HEK293 (cell line): ENCODE measurements at regions of chr22 and their contacts with region 1.

Region 1: DNA sequence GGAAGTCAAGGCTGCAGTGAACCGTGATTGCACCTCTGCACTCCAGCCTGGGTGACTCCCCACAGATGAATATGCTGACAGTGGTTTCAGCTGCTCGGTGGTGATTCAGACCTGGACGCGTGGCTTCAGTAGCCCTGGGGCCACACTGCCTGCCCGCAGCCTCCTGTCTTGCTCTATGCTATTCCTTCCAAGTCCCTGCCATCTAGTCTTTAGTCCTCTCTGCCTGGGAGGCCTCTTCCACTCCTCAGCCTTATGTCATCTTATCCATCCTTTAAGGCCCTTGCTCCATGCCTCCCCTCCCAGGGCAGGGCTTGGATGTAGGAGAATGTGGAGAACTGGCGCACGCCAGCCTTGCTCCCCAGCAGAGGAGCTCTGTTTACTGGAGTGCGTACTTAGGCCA is 23.0 kb downstream of the YDJC start:
- H3K4me3 ChIP-seq: no peak overlapping the region
- H3K27ac ChIP-seq: no peak overlapping the region
- H3K4me1 ChIP-seq: no peaks in the 10 kb centered on the region
- CTCF ChIP-seq: no peak

Region 2: DNA sequence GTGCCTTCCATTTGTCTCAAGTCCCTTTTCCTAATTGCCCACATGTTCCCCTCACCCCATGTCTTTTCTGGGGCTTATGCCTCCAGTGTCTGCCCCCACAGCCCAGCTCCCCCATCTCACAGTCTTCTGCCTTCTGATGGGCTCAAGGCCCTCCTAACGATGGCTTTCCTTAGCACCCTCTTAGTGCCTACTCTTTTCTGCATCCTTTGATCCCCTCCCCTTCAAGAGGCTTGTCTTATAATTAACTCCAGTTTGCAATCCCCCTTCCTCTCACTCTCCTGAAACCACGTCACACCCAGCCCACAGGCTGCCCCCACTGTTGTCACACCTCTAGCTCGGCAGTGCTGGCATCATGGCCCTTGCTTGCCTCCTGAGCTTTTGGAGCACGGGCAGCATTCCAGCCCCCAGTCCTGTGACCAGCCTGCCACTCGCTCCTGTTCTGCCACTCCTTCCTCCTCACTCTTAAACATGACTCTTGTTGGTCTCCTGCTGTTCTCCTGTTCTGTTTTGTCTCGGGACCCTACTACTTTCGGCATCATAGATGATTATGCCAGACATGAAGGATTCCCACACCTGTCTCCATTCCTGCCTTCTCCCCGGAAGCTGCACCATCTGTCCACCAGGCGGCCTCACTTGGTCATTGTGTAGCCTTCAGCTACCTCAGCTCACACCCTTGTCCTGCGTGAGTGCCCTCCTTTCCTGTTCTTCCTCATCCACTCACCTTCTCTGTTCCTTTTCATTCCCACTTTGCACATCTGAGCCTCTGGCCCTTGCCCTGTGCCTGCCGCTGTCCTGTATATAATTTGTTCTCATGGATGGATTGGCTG is 13.2 kb before region 1 on chr22:
- CTCF ChIA-PET with region 1: interaction called, 11 read pairs
- POLR2A ChIA-PET with region 1: no interaction called
- H3K4me3 ChIP-seq: no peak overlapping the region
- H3K27ac ChIP-seq: no peak overlapping the region
- H3K4me1 ChIP-seq: no peaks in the 10 kb centered on the region
- CTCF ChIP-seq: peak; percentile 67

Region 3: DNA sequence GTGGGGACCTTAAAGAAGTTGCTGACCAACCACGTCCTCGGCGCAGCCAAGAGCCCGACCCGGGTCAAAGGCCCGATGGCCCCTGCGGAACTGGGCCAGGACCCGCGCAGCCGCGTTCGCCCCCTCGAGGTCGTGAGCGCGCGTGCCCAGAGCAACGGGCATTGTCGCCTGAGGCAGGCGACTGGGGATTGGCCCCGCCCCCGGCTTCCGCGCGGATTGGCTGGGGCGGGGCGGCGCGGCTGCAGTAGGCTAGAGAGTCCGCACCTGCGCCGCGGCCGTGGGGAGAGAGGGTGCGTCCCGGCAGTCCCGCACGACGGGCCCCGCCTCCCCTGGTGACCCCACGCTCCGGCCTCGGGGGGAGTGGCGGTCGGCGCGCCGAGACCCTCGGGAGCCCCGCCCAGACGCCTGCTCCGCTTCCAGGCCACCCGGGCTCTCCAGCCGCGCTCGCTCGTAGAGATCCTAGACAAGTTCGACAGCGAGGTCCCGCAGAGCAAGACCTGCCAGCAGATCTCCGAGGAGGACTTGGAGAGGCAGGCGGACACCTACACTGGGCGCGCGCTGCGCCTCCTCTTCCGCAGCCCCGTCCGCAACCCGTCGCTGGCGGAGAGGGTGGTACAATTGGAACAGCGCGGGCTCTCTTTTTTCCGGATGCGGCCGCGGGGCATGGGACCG is 50.7 kb after region 1 on chr22:
- CTCF ChIA-PET with region 1: no interaction called
- POLR2A ChIA-PET with region 1: no interaction called
- H3K4me3 ChIP-seq: peak overlapping the region; percentile 50
- H3K27ac ChIP-seq: peak overlapping the region; percentile 13; the same call in 1 of the 2 replicates
- H3K4me1 ChIP-seq: no peaks in the 10 kb centered on the region
- CTCF ChIP-seq: peak; percentile 76

Region 4: GRCh38 chr22:21712894-21713712 is 106.3 kb after region 1 on chr22:
- CTCF ChIA-PET with region 1: no interaction called
- POLR2A ChIA-PET with region 1: no interaction called
- H3K4me3 ChIP-seq: no peak overlapping the region
- H3K27ac ChIP-seq: no peak overlapping the region
- H3K4me1 ChIP-seq: no peaks in the 10 kb centered on the region
- CTCF ChIP-seq: peak; percentile 91